MCF 10A (cell line): ENCODE measurements at regions of chr1 and their contacts with region 1.

Region 1: DNA sequence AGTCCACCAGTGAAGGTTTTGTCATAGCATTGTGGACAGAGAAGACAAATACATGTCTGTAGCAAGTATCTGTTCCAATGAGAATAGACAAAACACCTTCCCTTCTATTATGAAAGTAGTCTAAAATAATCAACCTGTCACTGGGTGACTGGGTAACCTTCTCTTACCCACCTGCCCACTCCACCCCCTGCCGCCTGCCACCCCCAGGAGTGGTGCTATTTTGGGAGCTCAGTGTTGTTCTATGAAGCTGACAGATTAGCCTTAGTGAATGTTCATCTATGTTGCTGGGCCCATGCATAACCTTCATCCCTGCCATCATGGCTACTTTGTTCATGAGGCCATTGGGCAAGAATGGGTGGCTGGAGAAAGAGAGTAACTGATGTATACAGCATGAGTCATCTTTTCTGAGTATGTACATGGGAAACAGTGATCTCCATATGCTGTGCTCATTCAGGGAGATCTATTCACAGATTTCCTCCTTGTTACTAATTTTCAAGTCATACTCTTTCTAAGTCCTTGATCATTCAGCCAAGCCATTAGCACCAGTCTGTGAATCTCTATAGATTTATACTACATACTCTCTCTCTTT is 24.8 kb downstream of the MARK1 start:
- DNase-seq: peak; percentile 55
- H3K4me3 Mint-ChIP-seq: no peak overlapping the region
- H3K27ac Mint-ChIP-seq: no peak overlapping the region
- H3K4me1 Mint-ChIP-seq: peaks cover 6% of the 10 kb centered on the region
- H3K27me3 Mint-ChIP-seq: no peaks in the 10 kb centered on the region
- CTCF ChIP-seq: no peak

Region 2: GRCh38 chr1:220407191-220407590 is 145.6 kb before region 1 on chr1:
- CTCF ChIA-PET with region 1: no interaction called
- POLR2A ChIA-PET with region 1: no interaction called
- intact Hi-C with region 1: no loop called
- DNase-seq: no peak
- H3K4me3 Mint-ChIP-seq: no peak overlapping the region
- H3K27ac Mint-ChIP-seq: no peak overlapping the region
- H3K4me1 Mint-ChIP-seq: no peaks in the 10 kb centered on the region
- H3K27me3 Mint-ChIP-seq: no peaks in the 10 kb centered on the region
- CTCF ChIP-seq: no peak

Region 3: DNA sequence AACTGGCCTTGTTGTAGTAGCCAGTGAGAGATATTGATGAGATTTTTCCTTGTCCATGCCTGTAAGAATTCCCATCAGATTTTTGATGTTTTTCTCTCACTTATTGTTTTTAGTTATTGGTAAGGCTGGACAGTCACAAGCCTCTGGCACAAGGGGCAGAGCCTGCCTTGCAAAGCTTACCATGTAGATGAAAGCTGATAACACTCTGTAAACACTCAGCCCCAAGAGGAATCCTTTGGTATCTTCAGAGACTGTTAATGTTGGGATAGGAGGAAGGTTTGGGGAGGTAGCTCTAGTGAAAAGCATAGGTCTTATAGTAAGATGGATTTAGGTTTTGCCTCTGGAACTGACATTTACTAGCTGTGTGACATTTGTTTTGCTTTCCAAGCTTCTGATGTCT is 12.9 kb after region 1 on chr1:
- CTCF ChIA-PET with region 1: interaction called, 7 read pairs
- POLR2A ChIA-PET with region 1: interaction called, 11 read pairs
- intact Hi-C with region 1: no loop called
- DNase-seq: no peak
- H3K4me3 Mint-ChIP-seq: no peak overlapping the region
- H3K27ac Mint-ChIP-seq: no peak overlapping the region
- H3K4me1 Mint-ChIP-seq: peaks cover 6% of the 10 kb centered on the region
- H3K27me3 Mint-ChIP-seq: no peaks in the 10 kb centered on the region
- CTCF ChIP-seq: no peak

Region 4: DNA sequence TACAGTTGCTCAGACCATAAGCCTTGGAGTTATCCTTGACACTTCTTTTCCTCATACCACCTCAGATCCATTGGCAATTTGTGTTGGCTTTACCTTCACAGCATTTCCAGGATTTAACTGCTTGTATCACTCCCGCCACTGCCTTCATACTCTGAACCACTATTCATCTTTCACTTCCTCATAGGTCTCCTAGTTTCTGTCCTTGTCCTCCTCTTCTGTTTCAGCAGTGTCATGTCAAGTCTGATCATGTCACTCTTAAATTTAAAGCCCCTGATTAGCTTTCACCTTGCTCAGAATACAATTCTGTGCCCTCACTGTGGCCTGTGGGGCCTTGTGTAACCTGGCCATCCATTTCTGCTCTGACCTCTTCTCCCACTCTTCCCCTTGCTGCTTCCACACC is 102.7 kb after region 1 on chr1:
- CTCF ChIA-PET with region 1: no interaction called
- POLR2A ChIA-PET with region 1: no interaction called
- intact Hi-C with region 1: no loop called
- DNase-seq: no peak
- H3K4me3 Mint-ChIP-seq: no peak overlapping the region
- H3K27ac Mint-ChIP-seq: no peak overlapping the region
- H3K4me1 Mint-ChIP-seq: no peaks in the 10 kb centered on the region
- H3K27me3 Mint-ChIP-seq: no peaks in the 10 kb centered on the region
- CTCF ChIP-seq: no peak